ENCODE measurements at regions of chr4 and their contacts with region 1.

Region 1: GRCh38 chr4:153573881-153574802 is 108.0 kb downstream of the TMEM131L start:
- DNase-seq: peak; percentile 70
- H3K4me3 Mint-ChIP-seq: no peak overlapping the region
- H3K27ac Mint-ChIP-seq: no peak overlapping the region
- H3K4me1 Mint-ChIP-seq: no peaks in the 10 kb centered on the region
- H3K27me3 Mint-ChIP-seq: no peaks in the 10 kb centered on the region
- CTCF ChIP-seq: peak; percentile 73

Region 2: DNA sequence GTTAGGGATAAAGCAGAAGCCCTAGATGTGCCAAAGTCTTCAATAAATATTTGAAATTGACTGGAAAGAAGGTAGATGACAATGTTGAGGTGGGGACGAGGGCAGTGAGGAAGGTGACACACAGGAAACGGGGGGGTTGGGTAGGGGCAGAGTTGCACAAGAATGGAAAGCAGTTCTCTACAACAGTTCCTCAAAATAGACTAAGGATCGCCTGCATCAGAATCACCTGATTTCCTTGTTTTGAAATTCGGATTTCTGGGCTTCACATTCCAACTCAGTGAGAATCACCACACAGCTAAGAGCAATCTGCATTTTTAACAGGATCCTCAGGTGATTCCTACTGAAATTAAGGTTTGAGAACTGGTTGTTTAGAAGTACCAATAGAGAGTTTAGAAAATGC is 723.8 kb before region 1 on chr4:
- CTCF ChIA-PET with region 1: no interaction called
- POLR2A ChIA-PET with region 1: no interaction called
- intact Hi-C with region 1: loop called (anchors 1 kb)
- DNase-seq: peak; percentile 61
- H3K4me3 Mint-ChIP-seq: peak overlapping the region; percentile 67
- H3K27ac Mint-ChIP-seq: peak overlapping the region; percentile 74
- H3K4me1 Mint-ChIP-seq: peaks cover 22% of the 10 kb centered on the region
- H3K27me3 Mint-ChIP-seq: no peaks in the 10 kb centered on the region
- CTCF ChIP-seq: no peak

Region 3: GRCh38 chr4:153232768-153233167 is 341.4 kb before region 1 on chr4:
- CTCF ChIA-PET with region 1: no interaction called
- POLR2A ChIA-PET with region 1: no interaction called
- intact Hi-C with region 1: loop called (anchors 10 kb)
- DNase-seq: peak; percentile 23
- H3K4me3 Mint-ChIP-seq: peak overlapping the region; percentile 17
- H3K27ac Mint-ChIP-seq: peak overlapping the region; percentile 47
- H3K4me1 Mint-ChIP-seq: peaks cover 32% of the 10 kb centered on the region
- H3K27me3 Mint-ChIP-seq: no peaks in the 10 kb centered on the region
- CTCF ChIP-seq: no peak

Region 4: GRCh38 chr4:153344131-153345010 is 229.8 kb before region 1 on chr4 and contains the start of gene MND1:
- CTCF ChIA-PET with region 1: interaction called, 55 read pairs
- POLR2A ChIA-PET with region 1: interaction called, 7 read pairs
- intact Hi-C with region 1: loop called (anchors 1 kb)
- DNase-seq: peak; percentile 84
- H3K4me3 Mint-ChIP-seq: peak within 1 kb of the TSS; percentile 84
- H3K27ac Mint-ChIP-seq: peak within 1 kb of the TSS; percentile 16
- H3K4me1 Mint-ChIP-seq: peaks cover 33% of the 10 kb centered on the region
- H3K27me3 Mint-ChIP-seq: no peaks in the 10 kb centered on the region
- CTCF ChIP-seq: peak; percentile 98
- total RNA-seq, gene MND1: 4.8 and 9.7 TPM in 2 replicates

Region 5: GRCh38 chr4:153432968-153433753 is 141.0 kb before region 1 on chr4:
- CTCF ChIA-PET with region 1: interaction called, 23 read pairs
- POLR2A ChIA-PET with region 1: interaction called, 3 read pairs
- intact Hi-C with region 1: loop called (anchors 1 kb)
- DNase-seq: peak; percentile 95
- H3K4me3 Mint-ChIP-seq: peak overlapping the region; percentile 57
- H3K27ac Mint-ChIP-seq: peak overlapping the region; percentile 72
- H3K4me1 Mint-ChIP-seq: peaks cover 7% of the 10 kb centered on the region
- H3K27me3 Mint-ChIP-seq: no peaks in the 10 kb centered on the region
- CTCF ChIP-seq: peak; percentile 53

Region 6: GRCh38 chr4:153466081-153466948 is 107.8 kb before region 1 on chr4 and contains the start of gene TMEM131L:
- CTCF ChIA-PET with region 1: interaction called, 27 read pairs
- POLR2A ChIA-PET with region 1: interaction called, 34 read pairs
- intact Hi-C with region 1: loop called (anchors 1 kb)
- DNase-seq: peak; percentile 66
- H3K4me3 Mint-ChIP-seq: peak within 1 kb of the TSS; percentile 87
- H3K27ac Mint-ChIP-seq: peak within 1 kb of the TSS; percentile 79
- H3K4me1 Mint-ChIP-seq: peaks cover 20% of the 10 kb centered on the region
- H3K27me3 Mint-ChIP-seq: no peaks in the 10 kb centered on the region
- CTCF ChIP-seq: no peak
- total RNA-seq, gene TMEM131L: 7.8 and 10.1 TPM in 2 replicates

Region 7: DNA sequence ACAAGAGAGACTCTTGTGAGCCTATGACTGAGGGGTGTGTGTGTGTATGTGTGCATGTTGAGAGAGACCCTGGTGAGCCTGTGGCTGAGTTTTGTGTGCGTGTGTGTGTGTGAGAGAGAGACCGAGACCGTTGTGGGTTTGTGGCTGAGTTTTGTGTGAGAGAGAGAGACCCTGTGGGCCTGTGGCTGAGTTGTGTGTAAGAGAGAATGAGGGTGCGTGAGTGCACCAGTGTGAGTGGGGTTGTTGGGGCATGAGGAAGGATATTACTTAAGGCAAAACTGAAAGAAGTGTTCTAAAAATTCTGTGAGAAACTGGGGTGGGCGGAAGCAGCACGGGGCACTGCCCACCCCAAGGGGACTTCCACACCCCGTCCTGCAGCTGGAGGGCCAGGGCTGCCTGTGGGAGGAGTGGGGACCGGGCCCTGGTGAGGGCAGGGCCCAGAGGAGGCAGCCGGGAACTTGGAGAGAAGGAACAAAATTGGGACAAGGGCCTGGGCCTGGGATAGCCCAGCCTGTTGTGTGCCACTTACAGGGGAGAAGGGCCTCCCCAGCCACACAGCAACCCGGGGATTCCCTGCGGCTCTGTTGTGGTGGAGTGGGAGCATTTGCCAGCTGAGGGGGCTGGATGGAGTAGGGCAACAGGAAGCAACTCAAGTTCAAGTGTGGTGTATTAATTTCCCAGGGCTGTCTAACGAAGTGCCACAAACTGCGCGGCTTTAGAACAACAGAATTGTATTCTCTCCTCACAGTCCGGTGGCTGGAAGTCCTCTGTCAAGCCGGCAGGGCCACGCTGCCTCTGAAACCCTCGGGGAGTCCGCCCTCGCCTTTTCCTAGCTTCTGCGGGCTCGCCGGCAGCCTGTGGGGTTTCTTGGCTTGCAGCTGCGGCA is 85.9 kb before region 1 on chr4:
- CTCF ChIA-PET with region 1: interaction called, 12 read pairs
- POLR2A ChIA-PET with region 1: interaction called, 10 read pairs
- intact Hi-C with region 1: loop called (anchors 5 kb)
- DNase-seq: no peak
- H3K4me3 Mint-ChIP-seq: peak overlapping the region; percentile 44
- H3K27ac Mint-ChIP-seq: peak overlapping the region; percentile 93
- H3K4me1 Mint-ChIP-seq: peaks cover 53% of the 10 kb centered on the region
- H3K27me3 Mint-ChIP-seq: no peaks in the 10 kb centered on the region
- CTCF ChIP-seq: no peak

Region 8: DNA sequence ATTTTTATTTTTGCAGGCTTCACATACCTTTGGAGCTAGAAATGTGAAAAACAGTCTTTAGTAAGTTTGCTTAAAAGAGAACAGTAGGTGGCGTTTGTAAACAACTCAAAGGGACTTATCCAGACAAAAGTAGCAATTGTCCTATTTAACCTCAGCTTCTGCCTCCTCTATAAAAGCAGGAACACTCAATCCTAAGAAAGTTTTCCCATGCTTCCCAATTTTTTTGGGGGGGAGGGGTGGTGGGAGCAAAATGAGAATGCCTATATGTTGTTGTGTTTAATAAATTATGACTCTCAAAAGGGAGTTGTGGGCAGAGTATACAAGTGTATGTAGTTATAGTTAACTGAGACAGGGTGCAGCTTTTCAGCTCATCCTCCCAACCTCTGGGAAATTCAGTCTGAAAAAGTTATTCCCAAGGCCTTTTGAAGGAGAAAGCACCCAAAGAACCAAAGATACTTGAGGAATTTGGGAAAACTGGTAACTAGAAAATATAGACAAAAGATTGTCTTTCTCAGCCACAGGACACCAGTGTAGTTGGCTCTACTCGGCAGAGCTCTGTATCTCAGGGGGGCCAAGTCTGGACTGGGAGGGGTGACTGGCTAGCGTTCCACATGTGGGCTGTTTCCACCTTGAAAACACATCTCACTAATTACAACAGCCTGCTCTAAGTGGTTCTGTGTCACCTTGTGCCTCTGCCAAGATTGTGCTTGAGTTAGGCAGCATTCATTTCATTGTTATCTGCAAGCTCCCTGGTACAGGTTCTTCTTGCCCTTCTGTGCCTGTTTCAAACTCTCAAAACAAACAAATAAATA is 212.0 kb after region 1 on chr4:
- CTCF ChIA-PET with region 1: no interaction called
- POLR2A ChIA-PET with region 1: no interaction called
- intact Hi-C with region 1: no loop called
- DNase-seq: peak; percentile 49
- H3K4me3 Mint-ChIP-seq: no peak overlapping the region
- H3K27ac Mint-ChIP-seq: no peak overlapping the region
- H3K4me1 Mint-ChIP-seq: peaks cover 13% of the 10 kb centered on the region
- H3K27me3 Mint-ChIP-seq: no peaks in the 10 kb centered on the region
- CTCF ChIP-seq: peak; percentile 47

Measured in MCF 10A (cell line).